Activated CD8-positive, alpha-beta T cell treated with anti-CD3 and anti-CD28 coated beads for 36 hours (primary cell): ENCODE measurements at regions of chr17 and their contacts with region 1.

Region 1: GRCh38 chr17:7136266-7136877 is 21.8 kb upstream of the ASGR2 start:
- DNase-seq: peak; percentile 88
- ATAC-seq: no peak
- H3K4me3 Mint-ChIP-seq: no peak overlapping the region
- H3K27ac Mint-ChIP-seq: no peak overlapping the region
- H3K4me1 Mint-ChIP-seq: peaks cover 22% of the 10 kb centered on the region
- H3K27me3 Mint-ChIP-seq: peaks cover 6% of the 10 kb centered on the region
- CTCF ChIP-seq: peak; percentile 95

Region 2: DNA sequence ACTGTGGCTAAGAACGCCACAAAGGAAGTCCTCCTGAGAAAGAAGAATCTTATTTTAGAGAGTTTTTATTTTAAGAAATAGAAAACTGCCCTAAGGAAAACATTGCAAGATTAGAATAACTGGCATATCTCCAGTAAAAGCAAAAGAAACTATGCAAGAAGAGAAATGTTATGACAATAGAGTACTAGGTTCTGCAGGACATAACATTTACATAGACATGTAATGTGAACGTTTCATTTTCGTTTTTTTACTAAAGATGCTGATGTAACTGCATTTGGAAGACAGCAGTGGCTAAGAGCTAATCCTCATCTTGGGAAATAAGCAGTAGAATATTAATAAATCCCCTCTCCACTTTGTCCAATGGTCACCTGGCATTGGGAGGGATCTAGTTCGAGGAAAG is 14.0 kb before region 1 on chr17:
- CTCF ChIA-PET with region 1: interaction called, 12 read pairs
- POLR2A ChIA-PET with region 1: no interaction called
- intact Hi-C with region 1: no loop called
- DNase-seq: no peak
- ATAC-seq: no peak
- H3K4me3 Mint-ChIP-seq: no peak overlapping the region
- H3K27ac Mint-ChIP-seq: no peak overlapping the region
- H3K4me1 Mint-ChIP-seq: no peaks in the 10 kb centered on the region
- H3K27me3 Mint-ChIP-seq: peaks cover 19% of the 10 kb centered on the region
- CTCF ChIP-seq: no peak

Region 3: GRCh38 chr17:7177196-7177953 is 41.0 kb after region 1 on chr17:
- CTCF ChIA-PET with region 1: interaction called, 22 read pairs
- POLR2A ChIA-PET with region 1: no interaction called
- intact Hi-C with region 1: no loop called
- DNase-seq: peak; percentile 75
- ATAC-seq: peak; percentile 83
- H3K4me3 Mint-ChIP-seq: peak overlapping the region; percentile 70
- H3K27ac Mint-ChIP-seq: no peak overlapping the region
- H3K4me1 Mint-ChIP-seq: peaks cover 12% of the 10 kb centered on the region
- H3K27me3 Mint-ChIP-seq: peaks cover 12% of the 10 kb centered on the region
- CTCF ChIP-seq: peak; percentile 90

Region 4: GRCh38 chr17:7380321-7380720 is 243.9 kb after region 1 on chr17:
- CTCF ChIA-PET with region 1: no interaction called
- POLR2A ChIA-PET with region 1: no interaction called
- intact Hi-C with region 1: no loop called
- DNase-seq: no peak
- ATAC-seq: no peak
- H3K4me3 Mint-ChIP-seq: no peak overlapping the region
- H3K27ac Mint-ChIP-seq: no peak overlapping the region
- H3K4me1 Mint-ChIP-seq: peaks cover 9% of the 10 kb centered on the region
- H3K27me3 Mint-ChIP-seq: peaks cover 36% of the 10 kb centered on the region
- CTCF ChIP-seq: no peak